Activated CD4-positive, alpha-beta T cell treated with anti-CD3 and anti-CD28 coated beads for 36 hours (primary cell): ENCODE measurements at regions of chr12 and their contacts with region 1.

Region 1: DNA sequence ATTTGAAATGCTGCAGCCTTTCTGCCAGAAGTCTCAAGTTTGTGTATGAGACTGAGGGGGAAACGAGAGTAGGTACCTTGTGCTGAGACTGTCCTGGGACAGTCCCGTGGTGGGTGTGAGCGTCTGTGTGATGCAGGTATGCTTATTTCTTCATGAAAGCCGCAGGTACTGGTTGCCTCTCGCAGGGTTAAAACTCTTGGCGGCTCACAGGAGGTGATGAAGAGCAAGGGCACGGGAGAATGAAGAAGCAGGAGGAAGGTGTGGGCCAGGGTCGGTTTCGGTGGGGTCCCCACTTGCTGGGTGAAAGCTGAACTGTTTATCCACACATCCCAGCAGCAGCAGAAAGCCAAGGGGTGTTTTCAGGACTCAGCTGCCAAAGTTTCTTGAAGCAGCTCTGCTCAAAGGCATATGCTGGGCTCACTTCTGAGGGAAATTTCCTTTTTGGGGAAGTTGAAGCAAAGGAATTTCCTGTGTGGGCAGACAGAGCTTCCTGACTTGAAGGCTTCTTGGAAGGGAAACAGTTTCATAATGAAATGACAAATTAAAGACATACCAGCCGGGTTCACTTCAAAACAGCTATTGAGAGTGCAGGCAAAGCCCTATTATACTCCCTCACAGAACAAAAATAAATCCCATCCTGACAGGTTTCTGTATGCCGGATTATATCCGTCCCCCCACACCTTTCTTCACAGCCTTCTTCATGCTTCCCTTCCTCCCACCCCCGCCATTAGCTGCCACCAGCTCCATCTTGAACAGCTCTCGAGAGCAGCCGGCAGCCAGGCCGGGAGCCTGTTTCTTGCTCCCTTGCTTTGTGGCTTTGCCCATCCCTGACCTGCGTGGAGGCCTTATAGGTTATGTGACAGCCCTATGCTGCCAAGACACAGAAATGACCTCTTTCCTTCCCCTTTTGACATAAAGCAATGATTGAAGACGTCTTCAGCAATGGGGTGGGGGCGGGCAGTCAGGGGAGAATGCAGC is 116.6 kb downstream of the ETV6 start:
- DNase-seq: peak; percentile 90
- ATAC-seq: peak; percentile 89
- H3K4me3 Mint-ChIP-seq: peak overlapping the region; percentile 32
- H3K27ac Mint-ChIP-seq: peak overlapping the region; percentile 84
- H3K4me1 Mint-ChIP-seq: peaks cover 100% of the 10 kb centered on the region
- H3K27me3 Mint-ChIP-seq: no peaks in the 10 kb centered on the region

Region 2: GRCh38 chr12:10794222-10794621 is 971.9 kb before region 1 on chr12:
- CTCF ChIA-PET with region 1: no interaction called
- POLR2A ChIA-PET with region 1: no interaction called
- intact Hi-C with region 1: no loop called
- DNase-seq: no peak
- ATAC-seq: no peak
- H3K4me3 Mint-ChIP-seq: no peak overlapping the region
- H3K27ac Mint-ChIP-seq: no peak overlapping the region
- H3K4me1 Mint-ChIP-seq: no peaks in the 10 kb centered on the region
- H3K27me3 Mint-ChIP-seq: peaks cover 4% of the 10 kb centered on the region

Region 3: DNA sequence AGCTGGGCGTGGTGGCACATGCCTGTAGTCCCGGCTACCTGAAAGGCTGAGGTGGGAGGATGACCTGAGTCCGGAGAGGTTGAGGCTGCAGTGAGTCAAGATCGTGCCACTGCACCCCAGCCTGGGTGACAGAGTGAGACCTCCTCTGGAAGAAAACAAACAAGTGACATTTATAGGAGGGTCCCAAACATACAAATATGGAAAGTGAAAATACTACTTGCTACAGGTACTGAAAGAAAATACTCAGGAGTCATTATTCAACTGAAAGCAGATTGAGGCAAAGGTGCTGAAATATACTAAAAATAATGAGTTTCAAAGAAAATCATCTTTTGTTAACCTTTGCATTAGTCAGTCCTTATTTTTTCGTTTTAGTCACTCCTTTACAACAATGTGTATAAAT is 63.1 kb before region 1 on chr12:
- CTCF ChIA-PET with region 1: interaction called, 3 read pairs
- POLR2A ChIA-PET with region 1: no interaction called
- intact Hi-C with region 1: loop called in 1 of 2 experiments (anchors 2 kb)
- DNase-seq: peak; percentile 50
- ATAC-seq: peak; percentile 88
- H3K4me3 Mint-ChIP-seq: peak overlapping the region; percentile 6
- H3K27ac Mint-ChIP-seq: peak overlapping the region; percentile 81
- H3K4me1 Mint-ChIP-seq: peaks cover 59% of the 10 kb centered on the region
- H3K27me3 Mint-ChIP-seq: no peaks in the 10 kb centered on the region

Region 4: DNA sequence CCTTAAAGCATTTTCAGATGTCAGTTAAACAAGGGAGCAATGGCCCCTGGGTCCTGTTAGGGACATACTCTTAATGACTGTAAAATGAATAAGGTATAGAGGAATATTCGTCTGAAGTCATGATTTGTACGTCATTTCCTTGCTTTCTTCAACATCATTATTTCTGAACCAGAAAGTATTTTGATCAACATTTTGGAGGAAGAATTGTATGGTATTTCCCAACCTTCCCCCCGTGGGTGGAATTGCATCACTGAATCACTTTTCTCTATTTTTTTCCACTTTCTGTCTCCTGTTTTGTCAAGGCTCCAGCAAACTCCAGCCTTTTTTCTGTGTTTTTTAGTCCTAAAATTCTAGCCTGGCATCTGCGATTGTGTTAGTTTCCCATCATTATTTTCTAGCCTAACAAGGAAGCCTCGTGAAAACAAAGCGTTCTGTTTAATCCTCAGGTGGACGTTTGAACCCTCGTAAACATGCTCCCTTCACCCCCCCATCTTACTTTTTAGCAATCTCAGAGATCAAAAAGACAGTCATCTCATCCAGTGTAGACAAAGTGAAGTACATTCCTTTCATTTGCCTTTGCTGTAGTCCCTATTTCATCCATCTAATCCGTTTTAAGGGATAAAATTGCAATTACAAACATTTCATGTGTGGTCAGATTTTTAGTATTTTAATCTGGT is 54.3 kb before region 1 on chr12:
- CTCF ChIA-PET with region 1: no interaction called
- POLR2A ChIA-PET with region 1: no interaction called
- intact Hi-C with region 1: loop called (anchors 2 to 5 kb)
- DNase-seq: no peak
- ATAC-seq: no peak
- H3K4me3 Mint-ChIP-seq: no peak overlapping the region
- H3K27ac Mint-ChIP-seq: peak overlapping the region; percentile 72
- H3K4me1 Mint-ChIP-seq: peaks cover 76% of the 10 kb centered on the region
- H3K27me3 Mint-ChIP-seq: no peaks in the 10 kb centered on the region

Region 5: GRCh38 chr12:11730299-11731041 is 35.6 kb before region 1 on chr12:
- CTCF ChIA-PET with region 1: interaction called, 17 read pairs
- POLR2A ChIA-PET with region 1: interaction called, 12 read pairs
- intact Hi-C with region 1: loop called (anchors 2 kb)
- DNase-seq: peak; percentile 39
- ATAC-seq: no peak
- H3K4me3 Mint-ChIP-seq: peak overlapping the region; percentile 21
- H3K27ac Mint-ChIP-seq: peak overlapping the region; percentile 88
- H3K4me1 Mint-ChIP-seq: peaks cover 86% of the 10 kb centered on the region
- H3K27me3 Mint-ChIP-seq: no peaks in the 10 kb centered on the region